Caco-2 (cell line): ENCODE measurements at regions of chr9 and their contacts with region 1.

Region 1: GRCh38 chr9:81689343-81690190 is at the start of gene TLE1:
- DNase-seq: peak; percentile 96 to 99
- H3K4me3 ChIP-seq: peak within 1 kb of the TSS; percentile 73
- H3K4me3 Mint-ChIP-seq: peak within 1 kb of the TSS; percentile 95
- H3K27ac Mint-ChIP-seq: peak within 1 kb of the TSS; percentile 91
- H3K4me1 ChIP-seq: peaks cover 26% of the 10 kb centered on the region
- H3K4me1 Mint-ChIP-seq: no peaks in the 10 kb centered on the region
- H3K27me3 ChIP-seq: no peaks in the 10 kb centered on the region
- H3K27me3 Mint-ChIP-seq: no peaks in the 10 kb centered on the region
- CTCF ChIP-seq: no peak
- total RNA-seq, gene TLE1: 17.9 and 18.3 TPM in 2 replicates

Region 2: GRCh38 chr9:81521892-81522291 is 167.7 kb before region 1 on chr9:
- CTCF ChIA-PET with region 1: no interaction called
- POLR2A ChIA-PET with region 1: no interaction called
- intact Hi-C with region 1: loop called (anchors 5 kb)
- DNase-seq: no peak
- H3K4me3 ChIP-seq: no peak overlapping the region
- H3K4me3 Mint-ChIP-seq: no peak overlapping the region
- H3K27ac Mint-ChIP-seq: no peak overlapping the region
- H3K4me1 ChIP-seq: no peaks in the 10 kb centered on the region
- H3K4me1 Mint-ChIP-seq: no peaks in the 10 kb centered on the region
- H3K27me3 ChIP-seq: no peaks in the 10 kb centered on the region
- H3K27me3 Mint-ChIP-seq: peaks cover under 1% of the 10 kb centered on the region
- CTCF ChIP-seq: no peak

Region 3: DNA sequence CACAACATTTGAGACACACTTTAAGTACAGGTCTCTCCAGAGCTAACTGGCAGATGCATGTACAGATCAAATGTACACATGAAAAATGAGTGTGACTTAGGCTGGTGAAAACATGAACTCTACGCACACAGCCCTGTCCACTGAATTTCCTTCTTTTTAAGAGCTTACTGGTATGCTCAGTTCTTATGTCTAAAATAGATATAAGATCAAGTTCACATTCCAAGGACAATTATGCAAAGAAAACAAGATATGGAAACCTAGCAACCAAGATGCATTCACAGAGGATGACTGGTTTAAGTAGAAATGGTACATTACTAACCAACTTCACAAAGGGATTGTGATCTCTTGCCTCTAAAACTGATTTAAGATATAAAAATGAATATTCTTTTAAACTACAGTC is 57.0 kb before region 1 on chr9:
- CTCF ChIA-PET with region 1: no interaction called
- POLR2A ChIA-PET with region 1: no interaction called
- intact Hi-C with region 1: loop called (anchors 5 kb)
- DNase-seq: no peak
- H3K4me3 ChIP-seq: no peak overlapping the region
- H3K4me3 Mint-ChIP-seq: no peak overlapping the region
- H3K27ac Mint-ChIP-seq: no peak overlapping the region
- H3K4me1 ChIP-seq: no peaks in the 10 kb centered on the region
- H3K4me1 Mint-ChIP-seq: no peaks in the 10 kb centered on the region
- H3K27me3 ChIP-seq: no peaks in the 10 kb centered on the region
- H3K27me3 Mint-ChIP-seq: no peaks in the 10 kb centered on the region
- CTCF ChIP-seq: no peak

Region 4: DNA sequence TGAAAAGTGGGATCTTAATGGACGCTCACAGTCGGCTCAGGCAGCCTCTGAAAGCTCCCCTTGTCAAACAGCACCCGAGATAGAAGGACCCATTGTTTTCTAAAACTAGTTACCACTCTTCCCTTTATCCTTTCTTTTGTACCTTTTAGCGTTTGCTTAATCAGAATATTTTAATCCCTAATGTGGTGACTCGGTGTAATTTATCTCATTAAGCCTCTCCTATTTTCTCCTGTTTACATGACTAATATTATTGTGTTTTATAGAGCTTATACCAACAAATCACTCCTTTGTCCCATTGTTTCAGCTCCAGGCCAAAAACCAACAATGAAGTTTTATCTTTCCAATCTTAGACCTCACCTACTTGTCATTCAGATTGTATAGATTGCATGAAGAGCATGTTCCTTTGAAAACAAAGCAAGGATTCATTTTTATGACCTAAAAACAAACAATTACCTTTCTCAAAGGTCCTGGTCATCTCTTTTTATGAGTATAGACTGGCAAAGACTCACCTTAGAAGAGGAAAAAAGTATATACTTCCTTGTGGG is 28.0 kb after region 1 on chr9:
- CTCF ChIA-PET with region 1: no interaction called
- POLR2A ChIA-PET with region 1: no interaction called
- intact Hi-C with region 1: loop called (anchors 1 kb)
- DNase-seq: peak in 1 of 2 experiments; percentile 5
- H3K4me3 ChIP-seq: no peak overlapping the region
- H3K4me3 Mint-ChIP-seq: no peak overlapping the region
- H3K27ac Mint-ChIP-seq: peak overlapping the region; percentile 9
- H3K4me1 ChIP-seq: peaks cover 8% of the 10 kb centered on the region; the same call in 1 of the 2 replicates
- H3K4me1 Mint-ChIP-seq: peaks cover 15% of the 10 kb centered on the region
- H3K27me3 ChIP-seq: no peaks in the 10 kb centered on the region
- H3K27me3 Mint-ChIP-seq: no peaks in the 10 kb centered on the region
- CTCF ChIP-seq: no peak

Region 5: DNA sequence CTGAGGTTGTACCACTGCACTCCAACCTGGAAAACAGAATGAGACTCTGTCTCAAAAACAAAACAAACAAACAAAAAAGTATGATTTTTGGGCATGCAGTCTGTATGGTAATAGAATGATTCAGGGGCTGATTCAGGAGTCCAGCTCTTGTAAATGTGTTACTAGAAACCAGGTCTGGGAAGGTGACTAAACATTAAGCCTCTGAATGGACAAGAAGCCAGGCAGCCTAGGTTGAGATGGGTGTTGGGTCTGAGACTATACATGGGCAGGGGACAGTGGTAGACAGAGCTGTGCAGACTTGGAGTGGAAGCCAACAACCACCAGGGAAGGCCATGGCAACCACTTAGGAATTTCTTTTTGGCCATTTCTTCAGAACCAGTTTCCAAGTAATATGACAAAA is 64.7 kb after region 1 on chr9:
- CTCF ChIA-PET with region 1: no interaction called
- POLR2A ChIA-PET with region 1: no interaction called
- intact Hi-C with region 1: no loop called
- DNase-seq: no peak
- H3K4me3 ChIP-seq: no peak overlapping the region
- H3K4me3 Mint-ChIP-seq: no peak overlapping the region
- H3K27ac Mint-ChIP-seq: no peak overlapping the region
- H3K4me1 ChIP-seq: no peaks in the 10 kb centered on the region
- H3K4me1 Mint-ChIP-seq: no peaks in the 10 kb centered on the region
- H3K27me3 ChIP-seq: no peaks in the 10 kb centered on the region
- H3K27me3 Mint-ChIP-seq: no peaks in the 10 kb centered on the region
- CTCF ChIP-seq: no peak

Region 6: GRCh38 chr9:81814401-81815166 is 125.0 kb after region 1 on chr9:
- CTCF ChIA-PET with region 1: no interaction called
- POLR2A ChIA-PET with region 1: no interaction called
- intact Hi-C with region 1: loop called (anchors 1 kb)
- DNase-seq: peak; percentile 41 to 48
- H3K4me3 ChIP-seq: no peak overlapping the region
- H3K4me3 Mint-ChIP-seq: peak overlapping the region; percentile 5
- H3K27ac Mint-ChIP-seq: peak overlapping the region; percentile 36
- H3K4me1 ChIP-seq: peaks cover 35% of the 10 kb centered on the region
- H3K4me1 Mint-ChIP-seq: peaks cover 36% of the 10 kb centered on the region
- H3K27me3 ChIP-seq: no peaks in the 10 kb centered on the region
- H3K27me3 Mint-ChIP-seq: no peaks in the 10 kb centered on the region
- CTCF ChIP-seq: no peak

Region 7: GRCh38 chr9:82606492-82607382 is 917.2 kb after region 1 on chr9:
- CTCF ChIA-PET with region 1: no interaction called
- POLR2A ChIA-PET with region 1: no interaction called
- intact Hi-C with region 1: loop called (anchors 10 kb)
- DNase-seq: peak; percentile 46 to 55
- H3K4me3 ChIP-seq: no peak overlapping the region
- H3K4me3 Mint-ChIP-seq: no peak overlapping the region
- H3K27ac Mint-ChIP-seq: no peak overlapping the region
- H3K4me1 ChIP-seq: no peaks in the 10 kb centered on the region
- H3K4me1 Mint-ChIP-seq: no peaks in the 10 kb centered on the region
- H3K27me3 ChIP-seq: no peaks in the 10 kb centered on the region
- H3K27me3 Mint-ChIP-seq: no peaks in the 10 kb centered on the region
- CTCF ChIP-seq: peak; percentile 28 to 41